ENCODE measurements at regions of chr3 and their contacts with region 1.

Region 1: DNA sequence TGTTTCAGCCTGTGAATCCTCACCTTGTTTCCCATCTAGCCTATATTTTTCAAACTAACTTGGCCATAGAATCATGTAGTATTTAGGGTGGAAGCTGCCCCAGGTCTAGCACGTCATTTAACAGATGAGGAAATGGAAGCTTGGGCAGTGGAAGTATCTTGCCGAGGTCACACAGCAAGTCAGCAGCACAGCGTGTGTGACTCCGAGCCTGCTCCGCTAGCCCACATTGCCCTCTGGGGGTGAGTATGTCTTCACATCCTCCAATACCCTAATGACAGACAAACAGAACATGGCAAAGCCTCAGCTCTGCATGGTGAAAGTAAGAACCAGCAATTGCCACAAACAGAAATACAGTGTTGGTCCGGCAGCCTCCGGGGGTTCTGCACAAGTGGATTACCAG is 2.2 kb upstream of the CCR5 start:
- DNase-seq: peak; percentile 75
- H3K4me3 Mint-ChIP-seq: no peak overlapping the region
- H3K27ac Mint-ChIP-seq: no peak overlapping the region
- H3K4me1 Mint-ChIP-seq: peaks cover 21% of the 10 kb centered on the region
- H3K27me3 Mint-ChIP-seq: peaks cover 16% of the 10 kb centered on the region

Region 2: DNA sequence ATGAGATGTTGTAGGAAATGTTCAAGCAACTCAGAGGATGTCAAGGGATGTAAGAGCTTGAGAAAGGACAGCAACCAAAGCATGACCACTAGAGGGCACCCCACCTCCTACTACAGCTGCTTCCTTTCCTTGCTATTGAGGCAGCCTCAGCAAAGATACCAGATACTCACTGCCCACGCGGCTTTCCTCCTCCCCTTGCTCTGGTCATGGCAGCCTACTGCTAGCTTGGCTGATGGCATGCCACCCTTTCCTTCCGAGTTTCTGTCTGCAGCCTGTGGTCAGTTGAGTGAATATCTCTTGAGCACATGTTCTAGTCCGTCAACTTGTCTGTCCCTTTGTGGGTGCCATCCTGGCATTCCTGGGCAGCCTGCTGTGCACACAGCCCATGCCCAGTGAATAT is 429.7 kb before region 1 on chr3:
- CTCF ChIA-PET with region 1: interaction called, 4 read pairs
- intact Hi-C with region 1: loop called (anchors 2 kb)
- DNase-seq: peak; percentile 94
- H3K4me3 Mint-ChIP-seq: no peak overlapping the region
- H3K27ac Mint-ChIP-seq: no peak overlapping the region
- H3K4me1 Mint-ChIP-seq: peaks cover 25% of the 10 kb centered on the region
- H3K27me3 Mint-ChIP-seq: peaks cover 3% of the 10 kb centered on the region

Region 3: GRCh38 chr3:46098319-46098761 is 270.2 kb before region 1 on chr3:
- CTCF ChIA-PET with region 1: interaction called, 10 read pairs
- intact Hi-C with region 1: loop called (anchors 2 kb)
- DNase-seq: peak; percentile 69
- H3K4me3 Mint-ChIP-seq: no peak overlapping the region
- H3K27ac Mint-ChIP-seq: peak overlapping the region; percentile 76
- H3K4me1 Mint-ChIP-seq: peaks cover 31% of the 10 kb centered on the region
- H3K27me3 Mint-ChIP-seq: peaks cover 20% of the 10 kb centered on the region

Region 4: DNA sequence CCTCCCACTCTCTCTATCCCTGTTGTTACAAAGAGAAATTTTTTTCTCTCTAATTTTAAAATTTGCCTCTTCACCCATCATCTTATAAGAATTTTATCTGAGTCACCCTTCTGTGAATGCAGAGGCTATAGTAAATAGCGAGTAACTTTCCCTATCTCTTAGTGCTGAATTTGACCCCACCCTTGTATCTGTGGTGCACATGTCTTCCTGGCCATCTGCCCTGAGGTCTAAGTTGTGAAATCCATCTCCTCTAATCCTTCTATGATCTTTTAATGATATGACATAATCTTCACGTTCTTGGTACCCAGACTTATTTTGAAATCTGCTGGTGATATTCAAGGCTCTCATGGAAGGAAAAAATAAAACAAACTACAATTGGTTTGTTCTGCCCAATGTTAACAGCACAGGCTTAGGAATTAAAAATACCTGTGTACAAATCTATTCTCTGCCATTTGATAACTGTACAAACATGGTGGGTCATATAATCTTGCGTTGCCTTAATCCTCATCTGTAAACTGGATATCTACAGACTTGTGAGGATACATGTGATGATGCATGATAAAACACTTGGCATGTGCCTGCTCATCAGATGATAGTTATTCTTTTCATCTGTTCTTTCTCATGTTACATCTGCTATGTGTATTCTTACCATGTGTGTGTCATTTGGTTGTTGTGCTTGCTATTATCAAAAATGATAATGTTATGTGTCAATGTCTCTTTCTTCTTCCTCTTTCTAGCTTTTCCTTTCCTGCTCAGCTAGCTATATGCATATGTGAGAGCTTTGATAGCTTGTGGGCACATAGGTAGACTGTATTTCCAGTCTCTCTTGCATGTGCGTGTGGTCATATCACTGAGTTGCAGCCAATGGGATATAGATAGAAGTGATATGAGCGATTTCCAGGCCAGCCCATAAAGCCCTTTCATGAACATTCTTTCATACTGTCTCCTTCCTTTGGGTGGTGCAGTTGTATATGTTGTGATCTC is 140.0 kb before region 1 on chr3:
- CTCF ChIA-PET with region 1: interaction called, 3 read pairs
- intact Hi-C with region 1: loop called (anchors 5 kb)
- DNase-seq: no peak
- H3K4me3 Mint-ChIP-seq: no peak overlapping the region
- H3K27ac Mint-ChIP-seq: no peak overlapping the region
- H3K4me1 Mint-ChIP-seq: no peaks in the 10 kb centered on the region
- H3K27me3 Mint-ChIP-seq: peaks cover 7% of the 10 kb centered on the region

Region 5: GRCh38 chr3:46353647-46354410 is 14.7 kb before region 1 on chr3 and contains the start of gene CCR2:
- CTCF ChIA-PET with region 1: interaction called, 16 read pairs
- intact Hi-C with region 1: no loop called
- DNase-seq: peak; percentile 32
- H3K4me3 Mint-ChIP-seq: no peak within 1 kb of the TSS
- H3K27ac Mint-ChIP-seq: no peak within 1 kb of the TSS
- H3K4me1 Mint-ChIP-seq: peaks cover 60% of the 10 kb centered on the region
- H3K27me3 Mint-ChIP-seq: peaks cover 34% of the 10 kb centered on the region
- total RNA-seq, gene CCR2: not detected